ENCODE measurements at regions of chr9 and their contacts with region 1.

Region 1: GRCh38 chr9:27333241-27334052 is 36.5 kb upstream of the EQTN start:
- DNase-seq: peak; percentile 62
- H3K4me3 ChIP-seq: no peak overlapping the region
- H3K27ac ChIP-seq: no peak overlapping the region
- H3K4me1 ChIP-seq: peaks cover 7% of the 10 kb centered on the region
- H3K27me3 ChIP-seq: no peaks in the 10 kb centered on the region
- CTCF ChIP-seq: peak; percentile 69 to 80

Region 2: GRCh38 chr9:27394154-27394825 is 60.8 kb after region 1 on chr9:
- CTCF ChIA-PET with region 1: no interaction called
- dilution Hi-C with region 1: loop called (anchors 10 kb)
- in situ Hi-C with region 1: no loop called
- intact Hi-C with region 1: no loop called
- DNase-seq: no peak
- H3K4me3 ChIP-seq: no peak overlapping the region
- H3K27ac ChIP-seq: peak overlapping the region; percentile 67
- H3K4me1 ChIP-seq: peaks cover 36% of the 10 kb centered on the region
- H3K27me3 ChIP-seq: no peaks in the 10 kb centered on the region
- CTCF ChIP-seq: no peak

Region 3: DNA sequence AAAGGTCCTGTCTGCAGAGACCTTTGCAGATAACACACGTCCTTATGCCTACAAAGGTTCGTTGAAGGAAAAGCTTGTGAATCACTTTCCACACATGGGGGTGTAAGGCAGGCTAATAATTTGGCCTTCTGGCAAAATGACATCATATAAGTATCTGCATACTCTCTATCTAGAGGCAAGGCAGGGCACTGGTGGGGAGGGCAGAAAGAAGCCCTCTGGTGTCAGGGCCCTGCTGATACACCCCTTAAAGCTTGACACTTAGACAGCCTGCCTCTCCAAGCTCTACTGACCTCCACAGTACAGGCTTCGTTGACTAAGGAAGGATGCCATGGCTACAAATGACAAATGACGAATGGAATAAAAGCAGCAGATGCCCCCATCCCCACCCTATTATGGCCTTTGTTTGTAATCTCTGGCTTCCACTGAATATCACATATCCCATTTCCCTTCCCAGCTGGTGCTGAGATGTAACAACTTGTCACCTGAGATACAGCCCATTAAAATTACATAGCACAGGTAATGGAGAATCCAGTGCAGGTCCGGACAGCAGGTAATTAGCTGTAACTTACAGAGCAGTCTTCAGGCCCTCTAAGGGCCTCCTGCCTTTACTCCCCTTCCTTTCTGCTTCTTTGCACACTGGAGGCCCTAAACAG is 113.7 kb after region 1 on chr9:
- CTCF ChIA-PET with region 1: no interaction called
- dilution Hi-C with region 1: no loop called
- in situ Hi-C with region 1: no loop called
- intact Hi-C with region 1: loop called (anchors 5 kb)
- DNase-seq: no peak
- H3K4me3 ChIP-seq: no peak overlapping the region
- H3K27ac ChIP-seq: no peak overlapping the region
- H3K4me1 ChIP-seq: peaks cover 10% of the 10 kb centered on the region
- H3K27me3 ChIP-seq: no peaks in the 10 kb centered on the region
- CTCF ChIP-seq: no peak

Region 4: DNA sequence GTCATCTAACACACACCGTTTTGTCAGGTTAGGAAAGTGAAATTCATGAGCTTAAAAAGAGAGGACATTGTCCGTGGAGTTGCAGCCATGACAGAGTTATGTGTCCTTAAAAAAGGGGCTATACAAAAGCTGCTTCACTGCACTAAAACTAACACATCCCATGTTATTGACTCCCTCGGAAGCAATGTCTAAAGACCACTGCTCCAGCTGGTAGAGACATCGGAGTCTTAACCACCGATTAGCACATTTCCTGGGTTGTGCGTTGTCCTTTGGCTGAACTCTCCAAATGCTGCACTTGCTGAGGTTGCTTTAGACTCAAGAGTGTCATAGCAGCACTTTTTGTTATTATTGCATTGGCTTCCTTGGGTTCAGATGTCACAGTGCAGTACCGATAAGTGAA is 368.1 kb after region 1 on chr9:
- CTCF ChIA-PET with region 1: no interaction called
- dilution Hi-C with region 1: no loop called
- in situ Hi-C with region 1: loop called in 1 of 2 experiments (anchors 25 kb)
- intact Hi-C with region 1: no loop called
- DNase-seq: no peak
- H3K4me3 ChIP-seq: no peak overlapping the region
- H3K27ac ChIP-seq: no peak overlapping the region
- H3K4me1 ChIP-seq: no peaks in the 10 kb centered on the region
- H3K27me3 ChIP-seq: peaks cover 3% of the 10 kb centered on the region
- CTCF ChIP-seq: no peak

Region 5: GRCh38 chr9:28073270-28073669 is 739.8 kb after region 1 on chr9:
- CTCF ChIA-PET with region 1: no interaction called
- dilution Hi-C with region 1: no loop called
- in situ Hi-C with region 1: no loop called
- intact Hi-C with region 1: loop called (anchors 2 kb)
- DNase-seq: peak; percentile 32
- H3K4me3 ChIP-seq: no peak overlapping the region
- H3K27ac ChIP-seq: no peak overlapping the region
- H3K4me1 ChIP-seq: no peaks in the 10 kb centered on the region
- H3K27me3 ChIP-seq: peaks cover 2% of the 10 kb centered on the region
- CTCF ChIP-seq: peak; percentile 49 to 65

Measured in mammary epithelial cell (primary cell).